Endothelial cell of umbilical vein (primary cell): ENCODE measurements at regions of chr17 and their contacts with region 1.

Region 1: GRCh38 chr17:41648411-41649195 is 24.2 kb upstream of the KRT17 start:
- DNase-seq: peak; percentile 78
- H3K4me3 ChIP-seq: peak overlapping the region in 1 of 3 experiments; percentile 25
- H3K27ac ChIP-seq: no peak overlapping the region
- H3K4me1 ChIP-seq: peaks cover 7% of the 10 kb centered on the region
- H3K27me3 ChIP-seq: no peaks in the 10 kb centered on the region
- CTCF ChIP-seq: peak; percentile 96 to 98
- POLR2A ChIP-seq: no peak

Region 2: GRCh38 chr17:40803617-40804082 is 845.0 kb before region 1 on chr17:
- CTCF ChIA-PET with region 1: interaction called, 12 read pairs
- POLR2A ChIA-PET with region 1: no interaction called
- dilution Hi-C with region 1: no loop called
- intact Hi-C with region 1: loop called (anchors 5 kb)
- DNase-seq: peak; percentile 71
- H3K4me3 ChIP-seq: no peak overlapping the region
- H3K27ac ChIP-seq: no peak overlapping the region
- H3K4me1 ChIP-seq: no peaks in the 10 kb centered on the region
- H3K27me3 ChIP-seq: peaks cover 20 to 39% of the 10 kb centered on the region in 2 experiments
- CTCF ChIP-seq: peak; percentile 85 to 88
- POLR2A ChIP-seq: no peak

Region 3: DNA sequence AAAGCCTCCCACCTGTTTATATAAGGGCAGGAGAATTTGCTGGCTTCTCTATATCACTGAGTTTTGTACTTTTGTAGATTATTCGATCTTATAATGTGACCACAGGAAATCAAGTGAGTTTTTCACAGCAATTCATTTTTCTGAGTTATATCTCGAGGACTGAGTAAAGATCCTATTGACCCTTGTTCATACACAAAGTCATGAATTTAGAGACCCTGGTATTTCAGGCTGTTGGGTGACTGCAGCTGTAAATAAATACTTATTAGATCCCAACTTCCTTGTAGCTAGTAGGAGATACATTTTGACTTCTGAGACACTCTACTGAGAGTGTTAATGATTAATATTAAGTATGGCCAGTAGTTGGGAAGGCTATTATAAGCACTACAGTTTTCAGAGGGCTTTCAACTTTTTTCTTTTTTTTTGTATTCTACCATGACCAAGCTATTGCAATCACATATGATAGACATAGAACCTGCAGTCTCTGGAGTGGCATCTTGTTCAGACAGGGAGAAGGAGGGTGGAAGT is 760.3 kb before region 1 on chr17:
- CTCF ChIA-PET with region 1: interaction called, 10 read pairs
- POLR2A ChIA-PET with region 1: no interaction called
- dilution Hi-C with region 1: no loop called
- intact Hi-C with region 1: no loop called
- DNase-seq: no peak
- H3K4me3 ChIP-seq: no peak overlapping the region
- H3K27ac ChIP-seq: no peak overlapping the region
- H3K4me1 ChIP-seq: no peaks in the 10 kb centered on the region
- H3K27me3 ChIP-seq: peaks cover 6 to 24% of the 10 kb centered on the region in 2 experiments
- CTCF ChIP-seq: no peak
- POLR2A ChIP-seq: no peak

Region 4: DNA sequence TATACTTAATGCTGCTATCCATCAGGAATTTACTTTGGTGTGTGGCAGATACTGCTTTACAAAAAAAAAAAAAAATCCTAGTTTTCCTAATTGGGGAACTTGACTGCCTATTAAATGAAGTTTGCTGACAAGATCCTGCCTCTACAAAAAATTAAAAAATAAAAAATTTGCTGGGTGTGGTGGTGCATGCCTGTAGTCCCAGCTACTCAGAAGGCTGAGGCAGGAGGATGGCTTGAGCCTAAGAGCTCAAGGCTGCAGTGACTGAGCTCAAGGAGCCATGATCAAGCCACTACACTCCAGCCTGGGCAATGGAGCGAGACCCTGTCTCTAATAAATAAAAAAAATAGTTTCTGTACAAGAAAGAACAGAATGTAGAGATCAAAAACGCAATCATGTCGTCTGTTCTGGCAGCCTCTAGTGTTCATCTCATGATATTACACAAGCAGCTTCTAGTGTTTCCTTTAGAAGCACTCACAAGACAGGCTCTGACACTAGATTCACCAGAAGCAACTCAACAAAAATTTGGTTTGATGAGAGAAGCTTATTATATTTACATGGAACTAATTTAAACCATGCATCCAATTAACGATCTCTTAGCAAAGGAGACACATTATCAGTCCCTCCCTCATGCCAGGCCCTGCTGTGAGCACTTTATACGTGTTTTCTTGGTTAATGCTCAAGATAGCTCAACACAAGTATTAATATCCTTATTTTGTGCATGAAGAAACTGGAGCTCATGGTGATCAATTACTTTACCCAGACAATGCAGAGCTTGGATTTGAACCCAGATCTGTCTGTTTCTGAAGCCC is 326.3 kb before region 1 on chr17:
- CTCF ChIA-PET with region 1: interaction called, 11 read pairs
- POLR2A ChIA-PET with region 1: no interaction called
- dilution Hi-C with region 1: no loop called
- intact Hi-C with region 1: no loop called
- DNase-seq: peak; percentile 49
- H3K4me3 ChIP-seq: no peak overlapping the region
- H3K27ac ChIP-seq: no peak overlapping the region
- H3K4me1 ChIP-seq: no peaks in the 10 kb centered on the region
- H3K27me3 ChIP-seq: peaks cover 0 to 2% of the 10 kb centered on the region in 2 experiments
- CTCF ChIP-seq: peak; percentile 40 to 69
- POLR2A ChIP-seq: no peak

Region 5: GRCh38 chr17:41496820-41497408 is 151.7 kb before region 1 on chr17:
- CTCF ChIA-PET with region 1: interaction called, 13 read pairs
- POLR2A ChIA-PET with region 1: no interaction called
- dilution Hi-C with region 1: no loop called
- intact Hi-C with region 1: no loop called
- DNase-seq: peak; percentile 83
- H3K4me3 ChIP-seq: no peak overlapping the region
- H3K27ac ChIP-seq: no peak overlapping the region
- H3K4me1 ChIP-seq: peaks cover 38% of the 10 kb centered on the region
- H3K27me3 ChIP-seq: no peaks in the 10 kb centered on the region
- CTCF ChIP-seq: peak; percentile 91 to 92
- POLR2A ChIP-seq: no peak

Region 6: DNA sequence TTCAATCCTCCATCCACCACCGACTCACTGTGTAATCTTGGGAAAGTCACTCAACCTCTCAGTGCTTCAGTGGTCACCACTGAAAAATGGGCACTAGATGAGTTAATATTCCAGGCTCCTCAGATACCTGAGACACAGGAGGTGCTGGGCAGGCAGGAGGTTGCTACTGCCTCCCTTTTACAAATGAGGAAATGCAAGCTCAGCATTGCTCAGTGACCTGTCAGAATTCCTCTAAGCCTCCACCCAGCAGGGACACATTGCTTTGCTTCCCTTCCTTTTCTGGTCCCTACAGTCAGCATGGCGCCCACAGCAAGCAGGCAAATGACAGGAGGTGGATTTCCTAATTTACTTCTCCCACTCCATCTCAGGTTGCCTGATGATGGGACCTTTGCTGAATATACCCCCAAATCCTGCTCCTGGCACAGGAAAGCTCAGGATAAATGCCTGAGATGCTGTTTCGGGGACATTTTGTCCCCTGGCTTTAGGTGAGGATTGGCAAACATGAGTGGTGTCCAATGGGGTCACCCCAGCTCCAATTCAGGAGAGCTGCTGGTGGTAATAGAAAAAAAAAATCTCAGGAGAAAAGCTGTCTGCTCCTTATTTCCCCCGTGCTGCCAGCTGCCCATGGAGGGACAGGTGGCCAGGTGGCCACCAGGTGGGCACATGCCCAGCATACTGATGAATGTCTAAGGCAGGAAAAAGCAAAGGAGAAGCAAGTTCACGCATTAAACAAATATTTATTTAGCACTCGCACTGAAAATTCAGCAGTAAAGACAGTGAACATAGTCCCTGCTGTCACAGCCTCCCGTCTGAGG is 138.1 kb before region 1 on chr17:
- CTCF ChIA-PET with region 1: no interaction called
- POLR2A ChIA-PET with region 1: no interaction called
- dilution Hi-C with region 1: no loop called
- intact Hi-C with region 1: no loop called
- DNase-seq: no peak
- H3K4me3 ChIP-seq: no peak overlapping the region
- H3K27ac ChIP-seq: no peak overlapping the region
- H3K4me1 ChIP-seq: no peaks in the 10 kb centered on the region
- H3K27me3 ChIP-seq: no peaks in the 10 kb centered on the region
- CTCF ChIP-seq: no peak
- POLR2A ChIP-seq: no peak

Region 7: GRCh38 chr17:41579484-41580243 is 68.9 kb before region 1 on chr17:
- CTCF ChIA-PET with region 1: interaction called, 44 read pairs
- POLR2A ChIA-PET with region 1: interaction called, 3 read pairs
- dilution Hi-C with region 1: no loop called
- intact Hi-C with region 1: loop called (anchors 1 kb)
- DNase-seq: peak; percentile 81
- H3K4me3 ChIP-seq: no peak overlapping the region
- H3K27ac ChIP-seq: no peak overlapping the region
- H3K4me1 ChIP-seq: no peaks in the 10 kb centered on the region
- H3K27me3 ChIP-seq: peaks cover 0 to 4% of the 10 kb centered on the region in 2 experiments
- CTCF ChIP-seq: peak; percentile 80 to 92
- POLR2A ChIP-seq: no peak

Region 8: GRCh38 chr17:41635121-41636097 is 13.2 kb before region 1 on chr17:
- CTCF ChIA-PET with region 1: interaction called, 28 read pairs
- POLR2A ChIA-PET with region 1: no interaction called
- dilution Hi-C with region 1: no loop called
- intact Hi-C with region 1: no loop called
- DNase-seq: no peak
- H3K4me3 ChIP-seq: no peak overlapping the region
- H3K27ac ChIP-seq: no peak overlapping the region
- H3K4me1 ChIP-seq: no peaks in the 10 kb centered on the region
- H3K27me3 ChIP-seq: no peaks in the 10 kb centered on the region
- CTCF ChIP-seq: no peak
- POLR2A ChIP-seq: no peak

Region 9: DNA sequence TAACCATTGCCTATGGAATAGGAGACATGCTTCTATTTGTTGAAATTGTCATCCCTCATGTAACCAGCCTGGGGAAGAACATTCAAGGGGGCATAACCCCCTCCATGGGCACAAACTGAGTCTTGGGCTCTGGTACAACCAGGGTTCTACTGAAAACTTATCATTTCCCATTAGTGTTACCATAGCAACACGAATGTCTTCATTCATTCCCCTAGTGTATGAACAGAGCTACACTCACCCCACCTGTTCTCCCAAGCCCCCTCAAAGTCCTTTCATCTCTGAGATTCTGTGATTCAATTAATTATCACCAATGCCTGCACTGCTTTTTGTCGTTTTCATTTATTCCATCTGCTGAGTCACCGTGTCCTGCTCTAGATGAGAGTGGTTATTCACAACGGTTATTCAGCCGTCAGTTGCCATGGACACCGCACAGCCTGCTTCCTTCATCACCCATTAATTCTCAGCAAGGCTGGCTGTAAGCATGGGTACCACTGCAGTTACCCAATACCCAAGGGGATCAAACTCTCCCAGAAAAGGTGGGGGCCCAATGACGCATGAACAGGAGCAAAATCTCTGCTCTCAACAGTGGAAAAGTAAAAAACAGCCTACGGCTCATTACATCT is 62.0 kb after region 1 on chr17:
- CTCF ChIA-PET with region 1: no interaction called
- POLR2A ChIA-PET with region 1: no interaction called
- dilution Hi-C with region 1: no loop called
- intact Hi-C with region 1: no loop called
- DNase-seq: peak; percentile 35
- H3K4me3 ChIP-seq: no peak overlapping the region
- H3K27ac ChIP-seq: no peak overlapping the region
- H3K4me1 ChIP-seq: no peaks in the 10 kb centered on the region
- H3K27me3 ChIP-seq: peaks cover 6 to 8% of the 10 kb centered on the region in 2 experiments
- CTCF ChIP-seq: no peak
- POLR2A ChIP-seq: no peak